Activated CD8-positive, alpha-beta T cell treated with anti-CD3 and anti-CD28 coated beads, Interleukin-2, amount 10 ng/mL, durations not matched to agents 7 days and 5 days (primary cell): ENCODE measurements at regions of chr19 and their contacts with region 1.

Region 1: DNA sequence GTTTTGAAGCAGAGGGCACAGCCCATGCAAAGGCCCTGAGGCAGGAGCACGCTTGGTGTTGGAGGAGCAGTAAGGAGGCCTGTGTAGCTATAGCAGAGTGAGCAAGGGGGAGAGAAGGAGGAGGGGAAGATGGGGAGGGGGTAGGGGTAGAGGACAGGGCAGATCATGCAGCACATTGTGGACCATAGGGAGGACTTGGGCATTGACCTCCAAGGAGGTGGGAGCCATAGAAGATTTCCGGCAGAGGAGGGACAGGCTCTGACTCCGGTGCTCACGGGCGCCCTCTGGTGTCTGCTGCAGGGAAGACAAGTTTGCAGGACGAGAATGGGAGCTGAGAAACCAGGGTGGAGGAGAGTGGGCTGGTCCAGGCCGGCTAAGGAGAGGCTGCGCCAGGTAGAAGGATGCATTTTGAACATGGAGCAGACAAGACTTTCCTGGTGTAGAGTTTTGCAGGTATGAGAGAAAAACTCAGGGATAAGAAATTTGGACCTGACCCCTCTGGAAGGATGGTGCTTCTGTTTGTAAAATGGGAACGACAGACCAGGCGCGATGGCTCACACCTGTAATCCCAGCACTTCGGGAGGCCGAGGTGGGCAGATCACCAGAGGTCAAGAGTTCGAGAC is 13.7 kb upstream of the CREB3L3 start:
- DNase-seq: peak; percentile 92
- ATAC-seq: peak; percentile 90
- H3K4me3 Mint-ChIP-seq: peak overlapping the region; percentile 5
- H3K27ac Mint-ChIP-seq: peak overlapping the region; percentile 81
- H3K4me1 Mint-ChIP-seq: peaks cover 15% of the 10 kb centered on the region
- H3K27me3 Mint-ChIP-seq: peaks cover 7% of the 10 kb centered on the region

Region 2: GRCh38 chr19:3984908-3985642 is 154.7 kb before region 1 on chr19 and contains the start of gene EEF2:
- CTCF ChIA-PET with region 1: interaction called, 27 read pairs
- POLR2A ChIA-PET with region 1: interaction called, 5 read pairs
- DNase-seq: peak; percentile 92
- ATAC-seq: peak; percentile 53
- H3K4me3 Mint-ChIP-seq: peak within 1 kb of the TSS; percentile 95
- H3K27ac Mint-ChIP-seq: peak within 1 kb of the TSS; percentile 92
- H3K4me1 Mint-ChIP-seq: peaks cover 53% of the 10 kb centered on the region
- H3K27me3 Mint-ChIP-seq: no peaks in the 10 kb centered on the region
- total RNA-seq, gene EEF2: 1,524 to 1,558 TPM

Region 3: GRCh38 chr19:4089400-4089908 is 50.3 kb before region 1 on chr19:
- CTCF ChIA-PET with region 1: interaction called, 12 read pairs
- POLR2A ChIA-PET with region 1: interaction called, 5 read pairs
- DNase-seq: peak; percentile 89
- ATAC-seq: peak; percentile 77
- H3K4me3 Mint-ChIP-seq: peak overlapping the region; percentile 73
- H3K27ac Mint-ChIP-seq: peak overlapping the region; percentile 96
- H3K4me1 Mint-ChIP-seq: peaks cover 72% of the 10 kb centered on the region
- H3K27me3 Mint-ChIP-seq: no peaks in the 10 kb centered on the region

Region 4: DNA sequence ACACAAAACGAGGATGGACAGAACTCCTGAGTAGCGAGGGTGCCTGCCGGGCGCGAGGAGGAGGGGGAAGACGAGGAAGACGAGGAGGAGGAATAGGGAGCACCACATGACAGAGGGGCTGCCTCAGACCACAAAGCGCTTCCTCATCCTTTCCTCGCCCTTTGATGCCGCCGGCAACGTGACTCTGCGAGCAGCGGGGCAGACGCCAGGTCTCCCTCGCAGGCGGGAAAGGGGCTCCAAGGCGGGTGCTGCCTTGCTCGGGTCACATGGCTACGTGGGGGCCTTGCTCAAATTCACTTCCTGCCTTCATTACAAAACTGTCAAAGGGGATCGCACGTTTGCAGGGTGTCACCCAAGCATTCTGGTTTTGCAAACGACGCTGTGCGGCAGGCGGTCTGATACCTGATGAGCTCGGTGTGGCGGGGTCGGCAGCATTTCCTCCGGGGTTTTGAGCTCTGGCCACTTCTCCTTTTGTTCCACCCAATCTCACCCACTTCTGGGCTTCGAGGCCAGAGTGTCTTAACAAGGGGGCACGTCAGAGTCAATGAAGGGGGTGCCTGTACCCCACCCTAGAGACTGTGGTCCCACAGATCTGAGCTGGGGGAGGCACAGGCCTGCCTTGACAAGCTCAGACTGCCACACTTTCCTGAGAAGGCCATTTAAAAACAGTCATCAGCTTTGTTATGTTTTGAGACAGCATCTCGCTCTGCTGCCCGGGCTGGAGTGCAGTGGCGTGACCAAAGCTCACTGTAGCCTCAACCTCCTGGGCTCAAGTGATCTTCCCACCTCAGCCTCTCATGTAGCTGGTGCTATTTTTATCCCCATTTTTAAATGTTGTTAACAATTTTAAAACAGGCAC is 30.7 kb before region 1 on chr19:
- CTCF ChIA-PET with region 1: interaction called, 22 read pairs
- POLR2A ChIA-PET with region 1: interaction called, 3 read pairs
- DNase-seq: peak; percentile 93
- ATAC-seq: peak; percentile 68
- H3K4me3 Mint-ChIP-seq: peak overlapping the region; percentile 48
- H3K27ac Mint-ChIP-seq: peak overlapping the region; percentile 97
- H3K4me1 Mint-ChIP-seq: peaks cover 84% of the 10 kb centered on the region
- H3K27me3 Mint-ChIP-seq: no peaks in the 10 kb centered on the region

Region 5: DNA sequence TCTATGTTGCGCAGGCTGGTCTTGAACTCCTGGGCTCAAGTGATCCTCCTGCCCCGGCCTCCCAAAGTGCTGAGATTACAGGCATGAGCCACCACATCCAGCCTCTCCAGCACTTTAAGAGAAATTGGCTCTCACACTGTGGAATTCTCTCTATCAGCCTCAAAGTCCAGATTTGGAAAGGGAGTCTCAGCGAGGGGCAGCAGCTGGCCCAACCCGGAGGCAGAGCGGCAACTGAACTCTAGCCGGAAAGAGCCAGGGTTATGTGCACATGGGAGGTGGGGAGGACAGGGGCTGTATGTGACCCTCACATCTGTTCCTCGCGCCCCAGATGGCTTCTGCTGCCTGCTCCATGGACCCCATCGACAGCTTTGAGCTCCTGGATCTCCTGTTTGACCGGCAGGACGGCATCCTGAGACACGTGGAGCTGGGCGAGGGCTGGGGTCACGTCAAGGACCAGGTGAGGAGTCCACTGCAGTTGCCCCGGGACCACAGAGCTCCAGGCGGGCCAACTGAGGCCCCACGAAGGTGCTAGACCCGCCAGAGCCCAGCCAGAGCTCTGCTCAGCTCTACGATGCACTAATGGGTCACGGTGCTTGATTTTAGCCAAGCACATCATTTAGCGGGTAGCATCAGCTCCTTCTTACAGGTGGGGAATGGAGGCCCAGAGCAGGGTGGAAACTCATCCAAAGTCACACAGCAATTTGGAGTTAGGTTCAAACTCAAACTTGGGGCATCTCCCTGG is 15.0 kb after region 1 on chr19:
- CTCF ChIA-PET with region 1: interaction called, 20 read pairs
- POLR2A ChIA-PET with region 1: no interaction called
- DNase-seq: no peak
- ATAC-seq: no peak
- H3K4me3 Mint-ChIP-seq: no peak overlapping the region
- H3K27ac Mint-ChIP-seq: no peak overlapping the region
- H3K4me1 Mint-ChIP-seq: peaks cover 23% of the 10 kb centered on the region
- H3K27me3 Mint-ChIP-seq: no peaks in the 10 kb centered on the region

Region 6: GRCh38 chr19:4186087-4186993 is 46.6 kb after region 1 on chr19:
- CTCF ChIA-PET with region 1: interaction called, 10 read pairs
- POLR2A ChIA-PET with region 1: no interaction called
- DNase-seq: peak; percentile 90
- ATAC-seq: peak; percentile 62
- H3K4me3 Mint-ChIP-seq: no peak overlapping the region
- H3K27ac Mint-ChIP-seq: no peak overlapping the region
- H3K4me1 Mint-ChIP-seq: peaks cover 20% of the 10 kb centered on the region
- H3K27me3 Mint-ChIP-seq: no peaks in the 10 kb centered on the region